ENCODE measurements at regions of chr17 and their contacts with region 1.

Region 1: DNA sequence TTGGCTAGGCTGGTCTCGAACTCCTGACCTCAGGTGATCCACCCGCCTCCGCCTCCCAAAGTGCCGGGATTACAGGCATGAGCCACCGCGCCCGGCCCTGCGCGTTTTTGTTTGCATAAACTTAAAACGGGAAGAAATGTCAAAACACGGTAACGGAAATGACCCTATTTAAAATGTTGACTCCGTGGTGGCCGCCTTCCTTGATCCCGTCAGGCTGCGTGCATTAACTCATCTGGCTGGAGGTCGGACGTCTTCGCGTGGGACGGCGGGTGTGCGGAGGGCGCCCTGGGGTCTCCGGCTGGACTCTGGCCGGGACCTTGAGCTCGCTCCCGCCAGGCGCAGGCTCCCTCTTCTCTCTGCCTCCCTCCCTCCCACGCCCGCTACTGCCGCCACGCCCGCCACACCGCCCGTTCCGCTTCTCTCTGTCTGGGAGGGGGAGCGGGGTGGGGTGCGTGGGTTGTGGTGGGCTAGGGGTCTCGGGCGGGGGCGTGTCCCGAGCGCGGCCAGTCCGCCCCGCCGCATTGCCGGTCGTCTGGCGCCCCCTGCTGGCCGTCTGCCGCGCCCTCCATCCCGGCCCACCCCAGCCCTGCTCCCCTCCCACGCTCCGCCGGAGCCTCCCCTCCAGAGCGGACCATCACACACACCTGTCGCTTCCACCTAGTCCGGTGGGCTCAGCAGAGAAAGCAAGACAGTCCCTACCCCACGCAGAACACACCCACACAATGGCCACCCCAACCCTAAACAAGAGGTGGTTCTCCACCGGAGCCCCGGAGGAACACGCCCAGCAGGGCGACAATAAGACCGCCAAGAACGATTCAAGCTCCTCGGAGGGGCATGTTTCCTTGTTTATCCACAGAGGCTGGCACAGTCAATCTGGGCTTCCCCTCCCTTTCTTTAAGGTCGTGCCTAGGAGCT is 1.2 kb upstream of the CCDC42 start:
- DNase-seq: peak; percentile 16
- ATAC-seq: peak; percentile 97
- H3K4me3 ChIP-seq: peak overlapping the region; percentile 52 to 58
- H3K27ac ChIP-seq: no peak overlapping the region
- H3K4me1 ChIP-seq: peaks cover 0 to 12% of the 10 kb centered on the region in 2 experiments; a peak in 2 of 4 replicates
- H3K27me3 ChIP-seq: no peaks in the 10 kb centered on the region
- CTCF ChIP-seq: peak; percentile 47 to 78 (median 76); a peak in 5 of 6 replicates
- POLR2A ChIP-seq: no peak
- RAD21 ChIP-seq: peak; percentile 89

Region 2: GRCh38 chr17:8572764-8573163 is 173.1 kb before region 1 on chr17:
- CTCF ChIA-PET with region 1: interaction called, 3 read pairs
- POLR2A ChIA-PET with region 1: no interaction called
- RAD21 ChIA-PET with region 1: interaction called in 1 of 2 experiments, 3 read pairs
- intact Hi-C with region 1: loop called (anchors 2 kb)
- DNase-seq: no peak
- ATAC-seq: no peak
- H3K4me3 ChIP-seq: no peak overlapping the region
- H3K27ac ChIP-seq: no peak overlapping the region
- H3K4me1 ChIP-seq: no peaks in the 10 kb centered on the region
- H3K27me3 ChIP-seq: no peaks in the 10 kb centered on the region
- CTCF ChIP-seq: peak; percentile 12 to 31 (median 17); a peak in 2 of 6 replicates
- POLR2A ChIP-seq: no peak
- RAD21 ChIP-seq: peak; percentile 49; the same call in 1 of the 2 replicates

Region 3: GRCh38 chr17:8762012-8762411 is 16.2 kb after region 1 on chr17:
- CTCF ChIA-PET with region 1: no interaction called
- POLR2A ChIA-PET with region 1: no interaction called
- RAD21 ChIA-PET with region 1: no interaction called
- intact Hi-C with region 1: no loop called
- DNase-seq: no peak
- ATAC-seq: no peak
- H3K4me3 ChIP-seq: no peak overlapping the region
- H3K27ac ChIP-seq: no peak overlapping the region
- H3K4me1 ChIP-seq: no peaks in the 10 kb centered on the region
- H3K27me3 ChIP-seq: no peaks in the 10 kb centered on the region
- CTCF ChIP-seq: no peak
- POLR2A ChIP-seq: no peak
- RAD21 ChIP-seq: no peak

Region 4: GRCh38 chr17:8776881-8777280 is 31.0 kb after region 1 on chr17:
- CTCF ChIA-PET with region 1: no interaction called
- POLR2A ChIA-PET with region 1: no interaction called
- RAD21 ChIA-PET with region 1: no interaction called
- intact Hi-C with region 1: no loop called
- DNase-seq: no peak
- ATAC-seq: no peak
- H3K4me3 ChIP-seq: no peak overlapping the region
- H3K27ac ChIP-seq: no peak overlapping the region
- H3K4me1 ChIP-seq: no peaks in the 10 kb centered on the region
- H3K27me3 ChIP-seq: no peaks in the 10 kb centered on the region
- CTCF ChIP-seq: no peak
- POLR2A ChIP-seq: no peak
- RAD21 ChIP-seq: no peak

Measured in HCT116 (cell line).